ENCODE measurements at regions of chr19 and their contacts with region 1.

Region 1: DNA sequence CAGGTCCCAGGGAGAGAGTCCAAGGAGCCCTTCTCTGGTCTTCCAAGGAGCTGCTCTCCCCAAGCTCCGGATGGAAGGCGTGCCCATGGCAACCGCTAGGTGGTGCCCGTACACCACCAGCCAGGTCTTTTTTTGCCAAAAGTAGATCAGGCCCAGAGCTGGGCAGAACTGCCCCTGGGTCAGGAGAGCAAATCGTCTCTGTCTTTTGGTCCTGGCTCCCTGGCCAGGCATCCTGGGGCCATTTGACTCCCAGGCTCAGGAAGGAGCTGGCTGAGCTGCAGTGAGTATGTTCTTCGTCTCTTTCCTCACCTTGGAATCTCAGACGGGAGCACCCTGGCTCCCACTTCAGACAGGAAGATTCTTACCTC is 24.6 kb upstream of the BCL3 start:
- DNase-seq: peak; percentile 54
- ATAC-seq: peak; percentile 91
- H3K4me3 ChIP-seq: no peak overlapping the region
- H3K27ac ChIP-seq: peak overlapping the region; percentile 6; the same call in 1 of the 2 replicates
- H3K4me1 ChIP-seq: peaks cover 50% of the 10 kb centered on the region
- H3K27me3 ChIP-seq: no peaks in the 10 kb centered on the region
- CTCF ChIP-seq: peak; percentile 97 to 99 (median 98); a peak in 5 of 6 replicates
- EP300 ChIP-seq: no peak
- POLR2A ChIP-seq: no peak
- RAD21 ChIP-seq: peak; percentile 97

Region 2: GRCh38 chr19:44689056-44689895 is 34.7 kb before region 1 on chr19:
- CTCF ChIA-PET with region 1: interaction called, 162 read pairs
- POLR2A ChIA-PET with region 1: interaction called, 7 read pairs
- RAD21 ChIA-PET with region 1: interaction called, 121 read pairs
- SMC1A ChIA-PET with region 1: interaction called, 99 read pairs
- in situ Hi-C with region 1: no loop called
- intact Hi-C with region 1: loop called (anchors 1 kb)
- DNase-seq: no peak
- ATAC-seq: peak; percentile 54
- H3K4me3 ChIP-seq: no peak overlapping the region
- H3K27ac ChIP-seq: no peak overlapping the region
- H3K4me1 ChIP-seq: peaks cover 44% of the 10 kb centered on the region
- H3K27me3 ChIP-seq: no peaks in the 10 kb centered on the region
- CTCF ChIP-seq: peak; percentile 89 to 98 (median 92)
- EP300 ChIP-seq: no peak
- POLR2A ChIP-seq: no peak
- RAD21 ChIP-seq: peak; percentile 82

Region 3: DNA sequence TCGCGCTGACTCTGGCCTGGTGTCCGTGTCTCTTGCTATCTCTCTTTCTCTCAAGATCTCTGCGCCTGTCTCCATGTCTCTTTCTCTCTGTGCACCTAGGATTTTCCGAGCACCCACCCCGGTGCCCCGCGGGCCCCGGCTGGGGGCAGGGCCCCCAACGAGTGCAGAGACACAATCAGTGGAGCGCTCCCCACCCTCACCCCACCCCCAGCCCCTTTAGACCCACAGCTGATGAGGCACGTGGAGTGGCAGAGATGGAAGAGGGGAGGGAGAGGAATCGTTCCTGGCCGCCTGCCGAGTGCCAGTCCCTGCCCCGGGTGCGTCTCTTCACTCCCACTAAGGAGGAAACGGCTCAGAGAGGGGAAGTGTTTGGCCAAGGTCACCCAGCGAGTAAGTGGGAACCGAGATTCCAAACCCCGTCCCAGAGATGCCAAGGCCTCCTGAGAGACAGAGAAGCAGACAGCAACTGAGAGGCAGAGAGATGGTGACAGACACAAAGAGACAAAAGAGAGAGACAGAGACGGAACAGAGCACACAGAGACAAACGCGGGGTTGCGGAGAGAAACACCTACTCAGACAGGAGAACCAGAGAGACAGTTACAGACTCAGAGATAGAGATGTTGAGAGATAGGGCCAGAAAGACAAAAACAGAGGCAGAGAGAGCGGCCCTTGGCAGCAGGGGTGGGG is 23.9 kb after region 1 on chr19:
- CTCF ChIA-PET with region 1: interaction called, 109 read pairs
- POLR2A ChIA-PET with region 1: interaction called, 32 read pairs
- RAD21 ChIA-PET with region 1: interaction called, 50 read pairs
- SMC1A ChIA-PET with region 1: interaction called, 115 read pairs
- in situ Hi-C with region 1: no loop called
- intact Hi-C with region 1: loop called (anchors 1 kb)
- DNase-seq: no peak
- ATAC-seq: peak; percentile 9
- H3K4me3 ChIP-seq: peak overlapping the region; percentile 98
- H3K27ac ChIP-seq: peak overlapping the region; percentile 92
- H3K4me1 ChIP-seq: peaks cover 33% of the 10 kb centered on the region
- H3K27me3 ChIP-seq: no peaks in the 10 kb centered on the region
- CTCF ChIP-seq: no peak
- EP300 ChIP-seq: no peak
- POLR2A ChIP-seq: 0 out of 2 replicates have a peak, but pooled peaks have one; percentile 26
- RAD21 ChIP-seq: no peak

Region 4: GRCh38 chr19:44770550-44771257 is 46.8 kb after region 1 on chr19:
- CTCF ChIA-PET with region 1: interaction called, 513 read pairs
- POLR2A ChIA-PET with region 1: interaction called, 26 read pairs
- RAD21 ChIA-PET with region 1: interaction called, 302 read pairs
- SMC1A ChIA-PET with region 1: interaction called, 328 read pairs
- in situ Hi-C with region 1: loop called (anchors 5 kb)
- intact Hi-C with region 1: loop called (anchors 1 kb)
- DNase-seq: peak; percentile 97
- ATAC-seq: peak; percentile 100
- H3K4me3 ChIP-seq: no peak overlapping the region
- H3K27ac ChIP-seq: peak overlapping the region; percentile 25; the same call in 1 of the 2 replicates
- H3K4me1 ChIP-seq: peaks cover 22% of the 10 kb centered on the region
- H3K27me3 ChIP-seq: no peaks in the 10 kb centered on the region
- CTCF ChIP-seq: peak; percentile 64 to 89 (median 64)
- EP300 ChIP-seq: no peak
- POLR2A ChIP-seq: no peak
- RAD21 ChIP-seq: peak; percentile 92

Region 5: DNA sequence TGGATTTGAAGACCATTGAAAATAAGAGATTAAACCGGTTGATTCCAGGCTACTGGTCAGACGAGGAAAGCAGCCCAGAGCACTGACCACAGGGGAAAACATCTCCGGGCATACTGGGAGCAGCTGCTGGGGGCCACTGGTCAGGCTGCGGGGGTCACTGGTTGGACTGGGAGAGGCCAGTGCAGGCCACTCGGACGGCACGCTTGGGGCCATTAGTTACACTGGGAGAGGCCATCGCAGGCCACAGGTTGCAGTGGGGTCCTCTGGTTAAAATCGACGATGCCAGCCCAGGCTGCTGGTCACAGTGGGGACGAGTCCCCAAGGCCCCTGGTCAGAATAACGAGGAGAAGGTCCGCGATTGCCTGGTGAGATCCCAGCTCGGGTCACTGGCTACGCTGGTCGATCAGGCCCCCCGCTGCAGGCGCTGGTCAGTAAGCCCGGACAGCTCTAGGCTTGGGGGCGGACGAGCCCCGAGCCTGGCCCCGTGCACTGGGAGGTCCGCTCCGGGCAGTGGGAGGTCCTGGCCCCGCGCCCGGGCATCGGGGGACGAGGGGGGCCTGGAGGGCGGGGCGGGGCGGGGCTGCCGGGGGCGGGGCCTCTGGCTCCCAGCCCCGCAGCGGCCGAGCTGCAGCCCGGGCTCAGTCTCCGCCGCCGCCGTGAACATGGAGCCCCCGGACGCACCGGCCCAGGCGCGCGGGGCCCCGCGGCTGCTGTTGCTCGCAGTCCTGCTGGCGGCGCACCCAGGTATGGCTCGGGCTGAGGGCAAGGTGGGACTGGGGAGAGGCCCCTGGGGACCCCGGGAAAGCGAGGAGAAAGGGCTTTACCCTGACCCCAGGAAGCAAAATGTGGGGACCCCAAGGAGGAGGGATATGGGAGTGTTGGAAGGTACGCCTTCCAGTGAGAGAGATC is 84.8 kb after region 1 on chr19 and contains the start of gene BCAM:
- CTCF ChIA-PET with region 1: interaction called, 16 read pairs
- POLR2A ChIA-PET with region 1: no interaction called
- RAD21 ChIA-PET with region 1: no interaction called
- SMC1A ChIA-PET with region 1: no interaction called
- in situ Hi-C with region 1: no loop called
- intact Hi-C with region 1: no loop called
- DNase-seq: no peak
- ATAC-seq: peak; percentile 49
- H3K4me3 ChIP-seq: no peak within 1 kb of the TSS
- H3K27ac ChIP-seq: no peak within 1 kb of the TSS
- H3K4me1 ChIP-seq: no peaks in the 10 kb centered on the region
- H3K27me3 ChIP-seq: no peaks in the 10 kb centered on the region; a peak in 2 of 4 replicates
- CTCF ChIP-seq: no peak
- EP300 ChIP-seq: no peak
- POLR2A ChIP-seq: no peak
- RAD21 ChIP-seq: no peak
- polyA plus RNA-seq, gene BCAM: not detected